CD8-positive, alpha-beta memory T cell (primary cell): ENCODE measurements at regions of chr5 and their contacts with region 1.

Region 1: GRCh38 chr5:32613050-32613672 is 27.8 kb downstream of the SUB1 start:
- DNase-seq: peak; percentile 63 to 84 (median 73)
- H3K4me3 ChIP-seq: no peak overlapping the region
- H3K4me3 Mint-ChIP-seq: no peak overlapping the region
- H3K27ac ChIP-seq: no peak overlapping the region
- H3K27ac Mint-ChIP-seq: peak overlapping the region in 3 of 8 donors; percentile 1 to 16 (median 13)
- H3K4me1 ChIP-seq: peaks cover 6% of the 10 kb centered on the region
- H3K4me1 Mint-ChIP-seq: peaks cover 4 to 14% (median 11%) of the 10 kb centered on the region in 3 donors
- H3K27me3 ChIP-seq: no peaks in the 10 kb centered on the region
- H3K27me3 Mint-ChIP-seq: no peaks in the 10 kb centered on the region

Region 2: DNA sequence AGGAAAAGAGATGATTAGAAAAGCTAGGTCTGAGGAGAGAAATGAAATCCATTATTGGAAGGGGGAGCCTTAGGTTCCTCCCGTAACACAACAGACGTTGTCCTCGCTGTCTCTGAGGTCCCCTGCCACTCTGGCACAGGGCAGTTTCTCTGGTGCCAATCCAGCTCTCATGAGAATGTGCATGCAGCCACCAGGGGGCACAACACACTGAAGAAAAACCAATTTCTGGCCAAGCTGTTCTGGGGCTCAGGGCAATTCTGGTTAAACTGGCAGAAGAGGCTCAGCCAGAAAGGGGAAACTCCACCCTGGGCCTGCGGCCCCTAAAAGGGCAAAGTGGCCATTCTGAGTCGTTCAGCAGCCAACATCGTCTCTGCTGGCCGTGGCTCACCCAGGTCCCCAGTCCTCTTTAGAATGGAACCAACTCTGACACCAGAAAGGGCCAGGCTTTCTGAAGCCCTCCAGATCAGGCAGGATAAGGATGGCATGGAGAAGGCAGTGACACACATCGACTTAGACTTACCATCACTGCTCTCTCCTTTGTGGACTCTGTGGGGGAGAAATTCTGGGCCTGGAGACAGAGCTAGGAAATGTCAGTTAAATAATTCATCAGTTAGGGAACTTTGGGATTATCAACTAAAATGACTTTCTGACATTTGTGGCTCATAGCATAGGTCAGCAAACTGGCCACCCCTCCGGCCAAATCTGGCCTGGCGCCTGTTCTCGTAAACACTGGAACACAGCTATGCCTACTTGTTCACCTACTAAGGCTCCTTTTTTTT is 380.5 kb before region 1 on chr5:
- CTCF ChIA-PET with region 1: interaction called, 14 read pairs
- POLR2A ChIA-PET with region 1: no interaction called
- DNase-seq: peak; percentile 56 to 82 (median 60)
- H3K4me3 ChIP-seq: no peak overlapping the region
- H3K4me3 Mint-ChIP-seq: peak overlapping the region in 1 of 7 donors; percentile 56
- H3K27ac ChIP-seq: no peak overlapping the region
- H3K27ac Mint-ChIP-seq: peak overlapping the region; percentile 6 to 94 (median 64)
- H3K4me1 ChIP-seq: no peaks in the 10 kb centered on the region
- H3K4me1 Mint-ChIP-seq: peaks cover 5 to 8% (median 6%) of the 10 kb centered on the region in 3 donors
- H3K27me3 ChIP-seq: no peaks in the 10 kb centered on the region
- H3K27me3 Mint-ChIP-seq: no peaks in the 10 kb centered on the region

Region 3: GRCh38 chr5:32489791-32490582 is 123.2 kb before region 1 on chr5:
- CTCF ChIA-PET with region 1: interaction called, 33 read pairs
- POLR2A ChIA-PET with region 1: no interaction called
- DNase-seq: peak; percentile 52 to 78 (median 58)
- H3K4me3 ChIP-seq: no peak overlapping the region
- H3K4me3 Mint-ChIP-seq: no peak overlapping the region
- H3K27ac ChIP-seq: no peak overlapping the region
- H3K27ac Mint-ChIP-seq: no peak overlapping the region
- H3K4me1 ChIP-seq: no peaks in the 10 kb centered on the region
- H3K4me1 Mint-ChIP-seq: no peaks in the 10 kb centered on the region
- H3K27me3 ChIP-seq: no peaks in the 10 kb centered on the region
- H3K27me3 Mint-ChIP-seq: peaks cover 0 to 1% of the 10 kb centered on the region in 2 donors

Region 4: GRCh38 chr5:32597041-32597629 is 16.0 kb before region 1 on chr5:
- CTCF ChIA-PET with region 1: no interaction called
- POLR2A ChIA-PET with region 1: no interaction called
- DNase-seq: no peak
- H3K4me3 ChIP-seq: no peak overlapping the region
- H3K4me3 Mint-ChIP-seq: no peak overlapping the region
- H3K27ac ChIP-seq: no peak overlapping the region
- H3K27ac Mint-ChIP-seq: peak overlapping the region in 5 of 8 donors; percentile 3 to 81 (median 18)
- H3K4me1 ChIP-seq: peaks cover 51% of the 10 kb centered on the region
- H3K4me1 Mint-ChIP-seq: peaks cover 73 to 91% (median 87%) of the 10 kb centered on the region in 3 donors
- H3K27me3 ChIP-seq: no peaks in the 10 kb centered on the region
- H3K27me3 Mint-ChIP-seq: no peaks in the 10 kb centered on the region